ENCODE measurements at regions of chr4 and their contacts with region 1.

Region 1: GRCh38 chr4:83074086-83074704 is 39.2 kb downstream of the COPS4 start:
- DNase-seq: no peak
- ATAC-seq: peak in 1 of 2 donors; percentile 52
- H3K4me3 ChIP-seq: no peak overlapping the region
- H3K27ac ChIP-seq: peak overlapping the region; percentile 65 to 75 (median 71)
- H3K4me1 ChIP-seq: peaks cover 15 to 21% of the 10 kb centered on the region in 2 donors
- H3K27me3 ChIP-seq: no peaks in the 10 kb centered on the region
- CTCF ChIP-seq: peak; percentile 27 to 65 (median 45)
- POLR2A ChIP-seq: no peak

Region 2: GRCh38 chr4:83110223-83110945 is 36.2 kb after region 1 on chr4:
- in situ Hi-C with region 1: no loop called
- intact Hi-C with region 1: loop called (anchors 1 kb)
- DNase-seq: peak; percentile 60 to 70
- ATAC-seq: peak; percentile 90 to 95
- H3K4me3 ChIP-seq: peak overlapping the region; percentile 57 to 66 (median 58)
- H3K27ac ChIP-seq: peak overlapping the region in 3 of 4 donors; percentile 16 to 43 (median 20)
- H3K4me1 ChIP-seq: peaks cover 4% of the 10 kb centered on the region in 2 donors
- H3K27me3 ChIP-seq: no peaks in the 10 kb centered on the region
- CTCF ChIP-seq: peak in 3 of 5 experiments; percentile 4 to 64 (median 49)
- POLR2A ChIP-seq: no peak

Region 3: GRCh38 chr4:83174844-83175414 is 100.7 kb after region 1 on chr4:
- in situ Hi-C with region 1: no loop called
- intact Hi-C with region 1: no loop called
- DNase-seq: no peak
- ATAC-seq: no peak
- H3K4me3 ChIP-seq: no peak overlapping the region
- H3K27ac ChIP-seq: no peak overlapping the region
- H3K4me1 ChIP-seq: no peaks in the 10 kb centered on the region
- H3K27me3 ChIP-seq: no peaks in the 10 kb centered on the region
- CTCF ChIP-seq: no peak
- POLR2A ChIP-seq: no peak

Region 4: DNA sequence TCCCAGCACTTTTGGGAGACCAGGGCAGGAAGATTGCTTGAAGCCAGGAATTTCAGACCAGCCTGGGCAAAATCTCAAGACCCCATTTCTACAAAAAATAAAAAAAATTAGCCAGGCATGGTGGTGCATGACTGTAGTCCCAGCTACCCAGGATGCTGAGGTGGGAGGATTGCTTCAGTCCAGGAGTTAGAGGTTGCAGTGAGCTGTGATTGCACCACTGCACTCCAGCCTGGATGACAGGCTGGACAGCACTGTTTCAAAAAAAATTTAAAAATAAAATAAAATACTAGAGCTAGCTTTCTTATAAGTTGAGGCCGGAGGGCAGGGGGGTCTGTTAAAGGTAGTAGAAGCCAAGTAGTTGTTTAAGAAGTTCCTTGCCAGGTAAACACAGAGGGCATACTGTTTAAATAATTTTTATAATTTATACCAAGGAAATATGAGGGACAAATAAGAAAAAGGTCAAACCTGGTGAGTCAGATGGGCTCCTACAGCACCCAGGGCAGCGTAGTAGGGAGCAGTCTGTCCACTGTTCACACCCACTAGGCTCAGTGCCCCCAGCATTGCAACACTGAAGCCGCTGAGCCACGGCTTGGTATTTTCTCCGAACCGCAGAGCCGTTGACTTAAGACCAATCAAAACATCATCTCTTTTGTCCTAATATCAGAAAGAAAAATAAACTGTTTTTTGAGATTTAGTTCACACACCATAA is 193.1 kb after region 1 on chr4:
- in situ Hi-C with region 1: loop called in 3 of 4 experiments (anchors 5 to 25 kb)
- intact Hi-C with region 1: no loop called
- DNase-seq: no peak
- ATAC-seq: no peak
- H3K4me3 ChIP-seq: no peak overlapping the region
- H3K27ac ChIP-seq: no peak overlapping the region
- H3K4me1 ChIP-seq: no peaks in the 10 kb centered on the region
- H3K27me3 ChIP-seq: no peaks in the 10 kb centered on the region
- CTCF ChIP-seq: no peak
- POLR2A ChIP-seq: no peak

Measured in gastrocnemius medialis (tissue), 4 donors.